Right ventricle myocardium superior (tissue), 1 donor: ENCODE measurements at regions of chr9 and their contacts with region 1.

Region 1: DNA sequence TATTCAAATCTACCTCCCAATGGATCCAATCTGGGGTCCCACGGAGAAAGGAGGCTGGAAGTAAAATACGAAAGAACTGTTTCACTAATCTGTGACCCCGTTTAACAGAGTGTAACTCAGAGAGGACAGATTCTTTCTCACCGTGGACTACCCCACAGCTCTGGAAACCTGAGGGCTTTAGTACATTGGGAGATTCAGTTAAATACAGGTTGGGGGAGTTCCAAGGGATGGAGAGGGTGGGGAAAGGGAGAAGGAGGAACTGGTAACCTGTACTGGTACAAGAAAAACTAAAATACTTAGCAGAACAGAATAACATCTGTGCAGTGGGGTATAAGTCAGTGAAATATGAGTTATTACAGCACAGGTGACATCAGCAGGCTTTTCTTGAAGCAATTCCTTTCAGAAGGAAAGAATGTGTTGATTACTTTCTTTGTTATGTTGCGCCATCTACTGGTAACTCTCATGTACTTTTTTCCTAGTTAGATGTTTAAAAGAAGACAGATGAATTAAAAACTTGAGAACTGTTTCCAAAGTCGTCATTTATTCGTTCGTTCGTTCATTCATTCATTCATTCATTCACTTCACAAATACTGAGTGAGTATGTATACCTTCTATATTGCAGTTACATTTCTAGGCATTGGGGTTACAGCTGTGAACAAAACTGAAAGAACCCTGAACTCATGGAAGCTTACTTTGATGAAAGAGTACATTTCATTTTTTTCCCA is 30.0 kb upstream of the STOM start:
- DNase-seq: no peak
- ATAC-seq: peak; percentile 61

Region 2: GRCh38 chr9:121153642-121154041 is 246.4 kb before region 1 on chr9:
- intact Hi-C with region 1: no loop called
- DNase-seq: no peak
- ATAC-seq: no peak

Region 3: DNA sequence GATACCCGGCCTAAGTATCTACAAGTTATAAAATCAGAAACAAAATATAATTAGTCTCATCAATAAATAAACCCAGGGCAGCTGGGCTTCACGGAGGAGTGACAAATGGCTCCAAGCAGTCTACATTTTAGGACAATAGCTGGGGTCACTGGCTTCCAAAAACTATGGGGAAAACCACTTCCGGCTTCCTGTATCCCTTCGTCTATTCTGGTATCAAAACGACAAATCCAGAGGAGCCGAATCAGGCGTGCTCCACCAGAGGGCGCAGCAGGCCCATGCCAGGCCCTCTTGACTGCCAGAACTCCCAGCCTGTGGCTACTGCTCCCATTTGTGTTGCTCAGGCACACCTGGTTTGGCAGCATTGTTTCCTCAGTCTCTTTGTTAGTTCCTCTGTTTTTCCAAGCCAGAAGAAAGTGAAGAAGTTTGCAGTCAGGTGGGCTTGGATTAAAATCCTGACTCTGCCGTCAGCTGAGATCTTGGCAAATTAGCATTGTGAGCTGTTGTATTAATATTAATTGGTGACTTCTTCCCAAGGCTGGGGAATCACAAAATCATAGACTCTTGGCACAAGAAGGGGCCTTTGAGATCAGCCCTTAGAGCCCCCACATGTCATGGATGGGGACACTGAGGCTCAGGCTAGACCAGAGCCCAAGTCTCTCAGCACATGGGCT is 186.8 kb before region 1 on chr9:
- intact Hi-C with region 1: loop called (anchors 5 kb)
- DNase-seq: peak; percentile 93
- ATAC-seq: peak; percentile 99

Region 4: GRCh38 chr9:121992571-121993212 is 592.6 kb after region 1 on chr9:
- intact Hi-C with region 1: no loop called
- DNase-seq: peak; percentile 71
- ATAC-seq: peak; percentile 85